Aorta (tissue), 5 donors: ENCODE measurements at regions of chr21 and their contacts with region 1.

Region 1: DNA sequence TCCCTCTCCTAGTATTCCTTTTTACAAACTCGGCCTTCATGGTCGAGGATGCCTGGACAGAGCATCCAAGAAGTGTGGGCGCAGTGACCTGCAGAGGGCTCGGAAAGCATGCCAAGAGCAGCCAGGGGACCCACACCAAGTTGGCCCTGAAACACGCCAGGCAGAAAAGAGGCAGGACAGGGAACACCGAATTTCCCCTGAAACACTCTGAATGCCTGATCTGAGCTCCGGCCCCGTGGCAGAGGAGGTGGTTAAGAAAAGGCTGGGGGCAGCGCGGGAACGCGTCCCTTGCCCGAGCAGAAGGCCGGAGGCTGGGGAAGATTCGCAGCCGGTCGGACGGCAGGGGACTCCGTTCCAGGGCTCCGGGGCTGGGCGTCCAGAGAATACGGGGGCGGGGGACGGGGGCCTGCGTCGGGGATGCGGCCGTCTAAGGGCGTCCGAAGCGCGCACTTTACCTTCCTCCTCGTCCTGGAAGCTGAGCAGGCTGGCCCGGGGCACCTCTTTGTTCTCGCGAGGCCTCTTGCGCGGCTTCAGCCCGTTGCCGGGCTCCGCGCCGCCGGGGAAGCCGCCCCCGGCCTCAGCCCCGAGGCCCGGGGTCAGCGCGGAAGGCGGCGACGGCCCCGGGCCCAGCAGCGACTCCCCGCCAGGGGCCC is 558 bp downstream of the PAXBP1 start:
- DNase-seq: peak; percentile 82 to 84
- ATAC-seq: peak; percentile 71
- H3K4me3 ChIP-seq: peak overlapping the region; percentile 52 to 99
- H3K27ac ChIP-seq: peak overlapping the region; percentile 32 to 91
- H3K4me1 ChIP-seq: no peaks in the 10 kb centered on the region
- H3K27me3 ChIP-seq: no peaks in the 10 kb centered on the region

Region 2: DNA sequence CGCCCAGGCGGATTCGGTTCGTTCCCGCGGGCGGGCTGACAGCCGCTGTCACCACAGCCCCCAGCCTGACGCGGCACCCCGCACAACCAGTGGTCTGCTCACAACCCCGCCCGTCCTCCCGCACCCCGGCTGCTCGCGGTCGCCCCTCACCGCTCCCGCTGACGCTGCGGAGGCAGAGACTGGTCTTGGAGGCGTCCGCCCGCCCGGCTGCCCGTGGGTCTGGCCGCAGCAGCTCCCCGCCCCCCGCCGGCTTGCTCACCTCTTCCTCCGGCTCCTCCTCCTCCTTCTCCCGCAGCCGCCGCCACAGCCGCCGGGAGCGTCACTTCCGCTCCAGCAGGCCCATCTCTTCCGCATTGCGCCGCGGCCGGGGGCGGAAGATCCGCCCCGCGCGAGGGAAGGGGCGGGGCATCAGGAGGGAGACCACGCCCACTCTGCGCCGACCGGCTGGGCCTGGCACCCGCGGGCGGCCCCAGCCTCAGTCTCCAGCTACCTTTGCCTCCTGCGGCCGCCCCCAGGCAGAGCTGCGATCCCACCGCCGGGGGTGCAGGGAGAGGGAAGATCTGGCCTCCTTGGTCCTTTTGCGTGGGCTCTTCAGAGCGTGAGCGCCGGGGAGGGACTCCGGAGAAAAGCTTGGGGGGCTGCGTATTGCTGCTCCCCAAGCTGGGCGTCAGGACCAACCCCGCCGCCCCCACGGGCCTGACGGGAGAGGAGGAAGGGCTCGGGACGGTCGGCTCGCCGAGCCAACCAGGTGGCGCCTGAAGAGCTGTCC is 43.1 kb before region 1 on chr21 and contains the start of gene SYNJ1:
- intact Hi-C with region 1: loop called (anchors 1 to 5 kb)
- DNase-seq: peak; percentile 98 to 99
- ATAC-seq: peak; percentile 99
- H3K4me3 ChIP-seq: peak within 1 kb of the TSS; percentile 64 to 93
- H3K27ac ChIP-seq: peak within 1 kb of the TSS; percentile 85 to 87
- H3K4me1 ChIP-seq: peaks cover 2 to 5% of the 10 kb centered on the region in 2 donors
- H3K27me3 ChIP-seq: no peaks in the 10 kb centered on the region
- total RNA-seq, gene SYNJ1: 14.3 to 27.4 TPM

Region 3: DNA sequence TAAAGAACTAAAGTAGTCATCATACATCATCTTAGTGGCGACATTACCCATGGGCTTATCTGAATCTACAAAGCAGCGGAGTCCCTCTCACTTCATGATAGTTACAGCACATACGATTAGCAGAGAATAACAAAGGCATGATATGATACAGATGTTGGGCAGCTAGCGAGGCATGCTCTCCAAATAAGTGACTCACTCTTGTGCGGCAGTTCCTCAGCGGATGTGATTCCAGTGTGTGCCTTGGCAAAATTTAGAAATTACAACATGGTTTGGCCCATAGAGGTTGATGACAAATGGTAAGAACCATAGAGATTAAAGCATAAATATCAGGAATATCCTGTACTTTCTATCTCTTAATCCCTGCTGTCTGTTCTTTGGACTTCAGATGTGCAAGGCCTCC is 48.7 kb after region 1 on chr21:
- intact Hi-C with region 1: loop called in 1 of 2 experiments (anchors 5 kb)
- DNase-seq: peak in 1 of 2 donors; percentile 67
- ATAC-seq: peak; percentile 92
- H3K4me3 ChIP-seq: no peak overlapping the region
- H3K27ac ChIP-seq: no peak overlapping the region
- H3K4me1 ChIP-seq: no peaks in the 10 kb centered on the region
- H3K27me3 ChIP-seq: no peaks in the 10 kb centered on the region